ENCODE measurements at regions of chr2 and their contacts with region 1.

Region 1: DNA sequence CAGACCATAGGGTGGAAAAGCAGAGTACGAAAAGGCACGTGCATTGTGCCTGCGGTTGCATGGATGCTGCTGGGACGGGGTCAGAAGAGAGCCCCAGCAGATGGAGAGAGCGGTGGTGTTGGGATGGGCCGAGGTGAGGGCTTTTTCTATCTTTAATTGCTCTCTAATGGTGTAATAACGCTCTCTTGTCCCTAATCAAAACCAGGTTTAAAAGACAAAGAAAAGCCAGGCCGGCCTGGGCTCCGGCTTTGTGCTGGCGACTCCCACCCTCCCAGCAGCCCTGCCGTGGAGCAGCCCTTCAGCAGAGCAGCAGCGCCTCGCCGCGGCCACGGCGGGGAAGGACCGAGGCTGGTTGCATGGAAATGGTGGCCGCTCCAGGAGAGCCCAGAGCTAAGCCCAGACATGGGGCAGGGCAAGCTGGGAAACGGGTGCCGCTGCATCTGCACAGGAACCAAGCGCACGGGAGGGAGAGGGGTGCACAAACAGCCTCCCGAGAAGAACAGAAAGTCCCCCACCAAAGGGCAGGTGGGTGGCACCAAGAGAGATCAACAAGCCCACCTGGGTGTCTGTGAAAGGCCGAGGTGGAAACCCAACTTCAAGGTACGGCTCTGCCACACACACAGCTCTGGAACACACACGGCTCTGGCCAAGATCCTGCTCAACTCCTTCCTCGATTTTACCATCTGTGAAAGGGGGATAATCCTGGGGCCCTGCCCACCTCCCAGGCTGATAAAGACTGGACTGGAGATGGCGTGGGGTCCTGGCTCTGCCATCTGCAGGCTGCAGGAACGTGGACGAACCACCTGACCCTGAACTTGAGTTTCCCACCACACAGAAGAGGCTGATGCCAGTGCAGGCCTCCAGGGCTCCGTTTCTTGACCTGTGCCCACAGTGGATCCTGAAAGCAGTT is 15.0 kb downstream of the HS1BP3 start:
- DNase-seq: peak; percentile 69
- H3K4me3 Mint-ChIP-seq: no peak overlapping the region
- H3K27ac Mint-ChIP-seq: no peak overlapping the region
- H3K4me1 Mint-ChIP-seq: no peaks in the 10 kb centered on the region
- H3K27me3 Mint-ChIP-seq: no peaks in the 10 kb centered on the region

Region 2: DNA sequence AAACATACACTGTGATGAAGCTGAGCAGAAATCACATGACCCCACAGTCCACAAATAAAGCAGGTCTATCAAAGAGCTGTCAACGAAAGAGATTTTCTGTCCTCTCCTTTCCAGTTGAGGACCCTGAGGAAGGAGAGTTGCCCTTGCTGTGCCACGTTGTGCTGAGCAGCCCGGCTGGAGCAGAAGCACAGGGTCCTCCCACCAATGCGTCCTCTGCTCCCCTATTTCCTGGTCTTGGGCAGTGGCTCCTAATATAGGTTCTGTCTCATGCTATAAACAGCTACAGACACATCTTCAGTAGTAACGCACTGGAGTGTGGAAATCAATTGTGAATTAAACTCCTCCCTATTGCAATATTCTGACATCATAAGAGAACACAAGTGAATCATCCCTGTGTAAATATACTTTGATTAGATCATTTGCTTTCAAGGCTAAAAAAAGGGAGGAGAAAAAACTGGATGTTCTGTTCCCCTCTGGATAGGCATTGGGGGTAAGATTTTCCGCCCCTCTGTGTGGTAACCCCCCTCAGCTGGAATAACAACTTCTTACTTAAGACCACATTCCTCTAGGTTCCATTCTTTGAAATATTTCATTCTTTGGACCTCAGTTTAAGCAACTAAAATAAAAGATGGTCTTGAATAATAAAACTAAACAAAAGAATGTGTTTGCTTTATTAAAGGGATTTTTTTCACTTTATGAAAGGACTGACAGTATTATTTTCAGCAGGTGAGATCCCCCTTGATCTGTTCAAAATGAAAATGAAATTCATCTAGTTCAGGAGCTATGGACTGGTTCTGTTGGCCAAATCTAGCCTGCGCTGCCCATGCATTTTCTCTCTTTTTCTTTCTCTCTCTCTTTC is 197.4 kb before region 1 on chr2:
- CTCF ChIA-PET with region 1: interaction called, 144 read pairs
- POLR2A ChIA-PET with region 1: no interaction called
- intact Hi-C with region 1: loop called (anchors 1 kb)
- DNase-seq: peak; percentile 3
- H3K4me3 Mint-ChIP-seq: no peak overlapping the region
- H3K27ac Mint-ChIP-seq: no peak overlapping the region
- H3K4me1 Mint-ChIP-seq: peaks cover 2% of the 10 kb centered on the region
- H3K27me3 Mint-ChIP-seq: peaks cover 14% of the 10 kb centered on the region

Region 3: GRCh38 chr2:20689428-20690264 is 53.7 kb after region 1 on chr2:
- CTCF ChIA-PET with region 1: no interaction called
- POLR2A ChIA-PET with region 1: no interaction called
- intact Hi-C with region 1: no loop called
- DNase-seq: no peak
- H3K4me3 Mint-ChIP-seq: no peak overlapping the region
- H3K27ac Mint-ChIP-seq: no peak overlapping the region
- H3K4me1 Mint-ChIP-seq: no peaks in the 10 kb centered on the region
- H3K27me3 Mint-ChIP-seq: no peaks in the 10 kb centered on the region

Region 4: GRCh38 chr2:20999906-21000645 is 364.1 kb after region 1 on chr2:
- CTCF ChIA-PET with region 1: no interaction called
- POLR2A ChIA-PET with region 1: no interaction called
- intact Hi-C with region 1: no loop called
- DNase-seq: no peak
- H3K4me3 Mint-ChIP-seq: no peak overlapping the region
- H3K27ac Mint-ChIP-seq: no peak overlapping the region
- H3K4me1 Mint-ChIP-seq: no peaks in the 10 kb centered on the region
- H3K27me3 Mint-ChIP-seq: peaks cover 1% of the 10 kb centered on the region